ENCODE measurements at regions of chr12 and their contacts with region 1.

Region 1: GRCh38 chr12:10364815-10365622 is 24.8 kb downstream of the KLRK1 start:
- DNase-seq: peak; percentile 82
- H3K4me3 ChIP-seq: peak overlapping the region; percentile 62 to 93 (median 78)
- H3K27ac ChIP-seq: peak overlapping the region; percentile 77
- H3K4me1 ChIP-seq: peaks cover 26% of the 10 kb centered on the region
- H3K27me3 ChIP-seq: no peaks in the 10 kb centered on the region
- CTCF ChIP-seq: no peak
- POLR2A ChIP-seq: no peak

Region 2: DNA sequence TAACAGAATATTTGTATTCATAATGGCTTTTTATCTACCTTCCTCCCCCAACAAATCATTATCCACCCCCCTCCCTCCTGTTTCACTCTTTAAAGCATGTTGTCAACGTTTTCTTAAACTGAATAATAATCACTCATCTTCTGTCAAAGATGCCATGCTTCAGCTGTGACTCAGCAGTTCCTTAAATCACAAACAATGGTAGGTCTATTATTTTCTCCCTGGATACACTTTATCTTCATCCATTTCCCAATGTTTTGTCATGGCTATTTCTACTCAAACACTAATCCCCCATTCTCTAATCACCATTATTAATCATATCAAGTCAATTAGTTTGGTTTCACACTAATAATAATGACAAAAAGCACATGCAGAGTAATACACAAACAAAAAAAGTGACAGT is 348.1 kb before region 1 on chr12:
- CTCF ChIA-PET with region 1: no interaction called
- POLR2A ChIA-PET with region 1: no interaction called
- dilution Hi-C with region 1: no loop called
- intact Hi-C with region 1: loop called (anchors 10 kb)
- DNase-seq: peak; percentile 86
- H3K4me3 ChIP-seq: no peak overlapping the region
- H3K27ac ChIP-seq: peak overlapping the region; percentile 99
- H3K4me1 ChIP-seq: peaks cover 27% of the 10 kb centered on the region
- H3K27me3 ChIP-seq: no peaks in the 10 kb centered on the region
- CTCF ChIP-seq: no peak
- POLR2A ChIP-seq: no peak

Region 3: GRCh38 chr12:10268037-10268436 is 97.0 kb before region 1 on chr12:
- CTCF ChIA-PET with region 1: no interaction called
- POLR2A ChIA-PET with region 1: no interaction called
- dilution Hi-C with region 1: no loop called
- intact Hi-C with region 1: no loop called
- DNase-seq: no peak
- H3K4me3 ChIP-seq: no peak overlapping the region
- H3K27ac ChIP-seq: no peak overlapping the region
- H3K4me1 ChIP-seq: no peaks in the 10 kb centered on the region
- H3K27me3 ChIP-seq: no peaks in the 10 kb centered on the region
- CTCF ChIP-seq: no peak
- POLR2A ChIP-seq: no peak

Region 4: DNA sequence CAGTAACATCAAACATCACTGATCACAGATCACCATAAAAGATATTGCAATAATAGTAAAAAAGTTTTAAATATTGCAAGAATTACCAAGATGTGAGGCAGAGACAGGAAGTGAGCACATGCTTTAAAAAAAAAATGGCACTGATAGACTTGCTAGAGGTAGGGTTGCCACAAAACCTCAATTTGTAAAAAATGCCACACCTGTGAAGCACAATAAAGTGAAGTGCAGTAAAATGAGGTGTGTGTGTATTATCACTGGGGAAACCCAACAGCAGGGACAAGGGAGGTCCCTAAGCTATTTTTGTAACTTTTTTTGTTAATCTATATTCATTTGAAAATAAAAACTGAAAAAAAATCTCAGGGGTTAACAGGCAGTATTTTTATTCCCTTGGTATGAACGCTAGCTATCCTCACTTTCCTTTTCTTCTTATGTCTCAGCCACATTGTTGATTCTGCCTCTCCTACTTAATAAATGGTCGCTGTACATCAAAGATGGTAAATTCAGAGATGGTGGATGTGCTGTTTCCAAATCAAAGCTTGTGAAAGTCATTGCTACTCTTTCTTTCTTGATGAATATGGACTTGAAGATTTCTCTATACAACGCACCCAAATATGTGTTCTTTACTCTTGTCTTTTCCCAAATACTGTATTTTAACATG is 71.3 kb before region 1 on chr12:
- CTCF ChIA-PET with region 1: no interaction called
- POLR2A ChIA-PET with region 1: no interaction called
- dilution Hi-C with region 1: no loop called
- intact Hi-C with region 1: no loop called
- DNase-seq: no peak
- H3K4me3 ChIP-seq: no peak overlapping the region
- H3K27ac ChIP-seq: no peak overlapping the region
- H3K4me1 ChIP-seq: no peaks in the 10 kb centered on the region
- H3K27me3 ChIP-seq: no peaks in the 10 kb centered on the region
- CTCF ChIP-seq: no peak
- POLR2A ChIP-seq: no peak

Region 5: GRCh38 chr12:10339053-10339840 is 25.8 kb before region 1 on chr12:
- CTCF ChIA-PET with region 1: interaction called, 3 read pairs
- POLR2A ChIA-PET with region 1: no interaction called
- dilution Hi-C with region 1: no loop called
- intact Hi-C with region 1: loop called (anchors 1 kb)
- DNase-seq: peak; percentile 48
- H3K4me3 ChIP-seq: no peak overlapping the region
- H3K27ac ChIP-seq: no peak overlapping the region
- H3K4me1 ChIP-seq: peaks cover 17% of the 10 kb centered on the region
- H3K27me3 ChIP-seq: no peaks in the 10 kb centered on the region
- CTCF ChIP-seq: no peak
- POLR2A ChIP-seq: no peak

Region 6: GRCh38 chr12:10562306-10562933 is 197.4 kb after region 1 on chr12:
- CTCF ChIA-PET with region 1: interaction called, 10 read pairs
- POLR2A ChIA-PET with region 1: no interaction called
- dilution Hi-C with region 1: no loop called
- intact Hi-C with region 1: no loop called
- DNase-seq: peak; percentile 72
- H3K4me3 ChIP-seq: no peak overlapping the region
- H3K27ac ChIP-seq: no peak overlapping the region
- H3K4me1 ChIP-seq: no peaks in the 10 kb centered on the region
- H3K27me3 ChIP-seq: no peaks in the 10 kb centered on the region
- CTCF ChIP-seq: peak; percentile 34 to 41
- POLR2A ChIP-seq: no peak

Region 7: DNA sequence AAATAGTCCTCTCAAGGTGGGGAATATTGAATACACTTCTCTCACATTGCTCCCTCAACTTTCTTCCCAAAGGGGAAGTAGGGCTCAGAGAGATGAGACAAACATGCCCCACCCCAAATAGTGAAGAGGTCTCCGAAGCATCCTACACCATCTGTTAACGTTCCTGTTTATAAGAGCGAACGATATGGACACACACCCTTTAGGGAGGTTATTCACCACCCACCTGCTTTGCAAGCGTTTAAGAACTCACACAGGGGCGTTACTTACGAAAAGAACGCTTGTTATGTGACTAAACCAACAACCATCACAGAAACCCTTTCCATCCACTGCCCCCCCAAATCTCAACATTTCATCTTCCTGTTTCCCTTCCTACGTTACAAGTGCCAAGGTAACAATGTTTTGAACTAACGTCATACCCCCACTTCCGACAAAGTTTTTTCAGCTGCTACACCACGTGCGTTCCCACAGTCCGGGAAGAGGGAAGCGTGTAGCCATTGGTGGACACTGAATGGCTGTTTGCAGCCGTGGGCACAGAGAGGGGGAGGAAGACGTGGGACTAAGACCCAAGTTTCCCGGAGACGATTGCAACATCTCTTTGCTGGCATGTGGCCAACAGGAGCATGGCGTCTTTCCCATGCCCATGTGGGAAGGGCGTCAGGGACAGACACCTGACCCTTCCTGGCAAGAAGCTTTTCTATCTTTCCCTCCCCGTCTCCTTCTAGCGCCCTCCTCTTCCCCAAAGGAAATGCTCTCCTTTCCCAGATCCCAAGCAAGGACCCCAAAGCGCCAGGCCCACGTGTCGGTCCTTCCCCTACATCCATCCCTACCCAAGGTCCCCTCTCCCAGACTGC is 356.9 kb after region 1 on chr12:
- CTCF ChIA-PET with region 1: no interaction called
- POLR2A ChIA-PET with region 1: no interaction called
- dilution Hi-C with region 1: no loop called
- intact Hi-C with region 1: loop called (anchors 2 kb)
- DNase-seq: peak; percentile 100
- H3K4me3 ChIP-seq: peak overlapping the region; percentile 87 to 92 (median 88)
- H3K27ac ChIP-seq: peak overlapping the region; percentile 98
- H3K4me1 ChIP-seq: peaks cover 57% of the 10 kb centered on the region
- H3K27me3 ChIP-seq: no peaks in the 10 kb centered on the region
- CTCF ChIP-seq: no peak
- POLR2A ChIP-seq: peak; percentile 39

Region 8: DNA sequence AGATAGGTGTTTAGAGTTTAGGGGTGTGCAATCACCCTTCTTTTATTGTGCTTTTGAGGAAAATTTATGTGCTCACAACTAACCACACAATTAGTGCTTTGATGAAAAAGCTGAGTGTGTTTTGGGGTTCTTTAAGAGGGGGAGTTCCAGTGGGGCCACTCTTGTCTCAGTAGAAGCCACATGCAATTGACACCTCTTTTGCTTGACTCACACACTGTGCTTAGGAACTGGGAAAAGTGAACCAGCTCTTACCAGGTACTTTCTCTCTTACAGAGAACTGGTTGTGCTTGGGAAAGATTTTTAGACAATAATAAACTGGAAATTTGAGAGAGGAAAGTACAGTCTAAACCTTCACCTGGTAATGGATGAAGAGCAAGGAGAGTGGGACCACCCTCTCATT is 370.4 kb after region 1 on chr12:
- CTCF ChIA-PET with region 1: no interaction called
- POLR2A ChIA-PET with region 1: no interaction called
- dilution Hi-C with region 1: no loop called
- intact Hi-C with region 1: no loop called
- DNase-seq: no peak
- H3K4me3 ChIP-seq: no peak overlapping the region
- H3K27ac ChIP-seq: no peak overlapping the region
- H3K4me1 ChIP-seq: no peaks in the 10 kb centered on the region
- H3K27me3 ChIP-seq: peaks cover 0 to 2% of the 10 kb centered on the region in 2 experiments
- CTCF ChIP-seq: no peak
- POLR2A ChIP-seq: no peak

Measured in endothelial cell of umbilical vein (primary cell).